CD4-positive, alpha-beta T cell (primary cell): ENCODE measurements at regions of chr7 and their contacts with region 1.

Region 1: GRCh38 chr7:142478479-142479072 is 220.7 kb upstream of the PRSS58 start:
- DNase-seq: peak in 6 of 14 experiments; percentile 7 to 72 (median 48)
- ATAC-seq: peak; percentile 27
- H3K4me3 ChIP-seq: no peak overlapping the region
- H3K4me3 Mint-ChIP-seq: peak overlapping the region; percentile 63
- H3K27ac ChIP-seq: peak overlapping the region; percentile 4 to 48
- H3K27ac Mint-ChIP-seq: peak overlapping the region; percentile 91
- H3K4me1 ChIP-seq: peaks cover 70% of the 10 kb centered on the region
- H3K4me1 Mint-ChIP-seq: peaks cover 89% of the 10 kb centered on the region
- H3K27me3 ChIP-seq: no peaks in the 10 kb centered on the region
- H3K27me3 Mint-ChIP-seq: no peaks in the 10 kb centered on the region
- CTCF ChIP-seq: peak; percentile 67

Region 2: GRCh38 chr7:141511676-141512396 is 966.7 kb before region 1 on chr7:
- CTCF ChIA-PET with region 1: no interaction called
- POLR2A ChIA-PET with region 1: no interaction called
- intact Hi-C with region 1: no loop called
- DNase-seq: no peak
- ATAC-seq: no peak
- H3K4me3 ChIP-seq: peak overlapping the region; percentile 38
- H3K4me3 Mint-ChIP-seq: peak overlapping the region; percentile 44
- H3K27ac ChIP-seq: no peak overlapping the region
- H3K27ac Mint-ChIP-seq: no peak overlapping the region
- H3K4me1 ChIP-seq: peaks cover 11% of the 10 kb centered on the region
- H3K4me1 Mint-ChIP-seq: peaks cover 11% of the 10 kb centered on the region
- H3K27me3 ChIP-seq: peaks cover 24 to 28% of the 10 kb centered on the region in 2 experiments
- H3K27me3 Mint-ChIP-seq: peaks cover 79% of the 10 kb centered on the region
- CTCF ChIP-seq: no peak

Region 3: GRCh38 chr7:142459551-142459963 is 19.0 kb before region 1 on chr7:
- CTCF ChIA-PET with region 1: interaction called, 46 read pairs
- POLR2A ChIA-PET with region 1: interaction called, 22 read pairs
- intact Hi-C with region 1: loop called (anchors 1 kb)
- DNase-seq: peak in 4 of 14 experiments; percentile 49 to 77 (median 60)
- ATAC-seq: peak; percentile 56
- H3K4me3 ChIP-seq: no peak overlapping the region
- H3K4me3 Mint-ChIP-seq: peak overlapping the region; percentile 2
- H3K27ac ChIP-seq: no peak overlapping the region
- H3K27ac Mint-ChIP-seq: peak overlapping the region; percentile 67
- H3K4me1 ChIP-seq: peaks cover 54% of the 10 kb centered on the region
- H3K4me1 Mint-ChIP-seq: peaks cover 87% of the 10 kb centered on the region
- H3K27me3 ChIP-seq: no peaks in the 10 kb centered on the region
- H3K27me3 Mint-ChIP-seq: no peaks in the 10 kb centered on the region
- CTCF ChIP-seq: peak; percentile 74